ENCODE measurements at regions of chr2 and their contacts with region 1.

Region 1: DNA sequence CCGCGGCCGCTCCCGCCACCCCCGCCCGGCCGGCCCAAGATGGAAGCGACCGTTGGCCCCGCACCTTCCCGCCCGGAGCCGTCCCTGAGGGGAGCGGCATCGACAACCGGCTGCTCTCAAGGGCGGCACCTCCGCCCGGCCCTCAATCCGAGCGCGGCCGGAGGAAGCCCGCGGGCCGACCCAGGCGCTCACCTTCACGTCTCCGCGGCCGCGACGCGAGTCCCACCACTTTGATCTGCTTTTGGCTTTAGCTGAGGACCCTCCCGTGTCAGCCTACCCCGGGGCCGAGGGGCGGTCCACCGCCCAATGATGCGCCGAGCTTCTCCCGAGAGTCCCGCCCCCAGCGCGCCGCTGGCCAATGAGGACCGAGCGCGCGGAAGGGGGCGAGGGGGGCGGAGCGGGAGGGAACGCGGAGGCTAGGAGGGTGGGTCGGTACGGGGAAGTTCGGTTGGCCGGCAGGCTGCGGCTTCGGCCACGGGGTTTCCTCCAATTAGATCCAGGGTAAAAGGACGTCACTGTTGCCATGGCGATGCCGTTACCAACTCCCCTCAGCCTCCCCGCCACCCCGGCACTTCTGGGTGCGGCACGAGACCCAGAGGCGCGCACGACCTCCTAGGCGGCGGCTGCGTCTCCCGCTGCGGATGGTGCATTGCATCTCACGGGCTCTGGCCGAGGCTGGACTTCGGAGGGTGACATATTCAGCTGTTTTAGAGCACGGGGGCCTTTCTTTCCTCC is at the start of gene YWHAQ:
- DNase-seq: peak; percentile 99
- ATAC-seq: peak; percentile 85 to 96 (median 87)
- H3K4me3 ChIP-seq: peak within 1 kb of the TSS; percentile 68
- H3K4me3 Mint-ChIP-seq: peak within 1 kb of the TSS; percentile 96
- H3K27ac ChIP-seq: peak within 1 kb of the TSS; percentile 94
- H3K27ac Mint-ChIP-seq: peak within 1 kb of the TSS; percentile 94 to 97
- H3K4me1 ChIP-seq: peaks cover 32% of the 10 kb centered on the region
- H3K4me1 Mint-ChIP-seq: peaks cover 54 to 59% of the 10 kb centered on the region in 2 donors
- H3K27me3 ChIP-seq: no peaks in the 10 kb centered on the region
- H3K27me3 Mint-ChIP-seq: no peaks in the 10 kb centered on the region
- CTCF ChIP-seq: no peak
- total RNA-seq, gene YWHAQ: 227 to 240 (median 238) TPM

Region 2: DNA sequence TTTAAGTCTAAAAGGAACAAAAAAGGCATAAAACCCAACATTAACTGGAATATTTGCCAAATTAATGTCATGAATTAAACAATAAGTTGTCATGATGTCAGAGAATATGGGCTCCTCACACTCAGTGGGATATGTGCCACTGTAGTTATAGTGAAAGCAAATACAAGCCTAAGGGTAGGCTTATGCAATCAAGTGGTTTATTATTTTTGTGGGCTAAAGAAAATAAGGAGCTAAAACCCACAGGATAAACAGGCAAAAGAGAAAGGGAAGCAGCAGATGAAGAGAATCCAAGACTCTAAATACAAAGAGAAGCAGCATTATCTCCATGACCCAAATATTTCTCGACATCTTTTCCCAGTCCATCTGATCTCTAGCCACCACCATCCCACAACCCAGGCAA is 17.6 kb before region 1 on chr2:
- intact Hi-C with region 1: loop called (anchors 2 kb)
- DNase-seq: no peak
- ATAC-seq: peak in 2 of 3 donors; percentile 44 to 52
- H3K4me3 ChIP-seq: no peak overlapping the region
- H3K4me3 Mint-ChIP-seq: no peak overlapping the region
- H3K27ac ChIP-seq: no peak overlapping the region
- H3K27ac Mint-ChIP-seq: peak overlapping the region; percentile 47 to 56
- H3K4me1 ChIP-seq: peaks cover 16% of the 10 kb centered on the region
- H3K4me1 Mint-ChIP-seq: peaks cover 86 to 97% of the 10 kb centered on the region in 2 donors
- H3K27me3 ChIP-seq: no peaks in the 10 kb centered on the region
- H3K27me3 Mint-ChIP-seq: no peaks in the 10 kb centered on the region
- CTCF ChIP-seq: no peak

Region 3: GRCh38 chr2:9681427-9681817 is 50.5 kb after region 1 on chr2:
- intact Hi-C with region 1: loop called (anchors 2 kb)
- DNase-seq: peak; percentile 48 to 70
- ATAC-seq: peak; percentile 83 to 87 (median 85)
- H3K4me3 ChIP-seq: no peak overlapping the region
- H3K4me3 Mint-ChIP-seq: peak overlapping the region; percentile 31
- H3K27ac ChIP-seq: peak overlapping the region; percentile 87
- H3K27ac Mint-ChIP-seq: peak overlapping the region; percentile 96 to 99
- H3K4me1 ChIP-seq: peaks cover 27% of the 10 kb centered on the region
- H3K4me1 Mint-ChIP-seq: peaks cover 21 to 25% of the 10 kb centered on the region in 2 donors
- H3K27me3 ChIP-seq: no peaks in the 10 kb centered on the region
- H3K27me3 Mint-ChIP-seq: no peaks in the 10 kb centered on the region
- CTCF ChIP-seq: no peak

Measured in natural killer cell (primary cell).